ENCODE measurements at regions of chrX and their contacts with region 1.

Region 1: DNA sequence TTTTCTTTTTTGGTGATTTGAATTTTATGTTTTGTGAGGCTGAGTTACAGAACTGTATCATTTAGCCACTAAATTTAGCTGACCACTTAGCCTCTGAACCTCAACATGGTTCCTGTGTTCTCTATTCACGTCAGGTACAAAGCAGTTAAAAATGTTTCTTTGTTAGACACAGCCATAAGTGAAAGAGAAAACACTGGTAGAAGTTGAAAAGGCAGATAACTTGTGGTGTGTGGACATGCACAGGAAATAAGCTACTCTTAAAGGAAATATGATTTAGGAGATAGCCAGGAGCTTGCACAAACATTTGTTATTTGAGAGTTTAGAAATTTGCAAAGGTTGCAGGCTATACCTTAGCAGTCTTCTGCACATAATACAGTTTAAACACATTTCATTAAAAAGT is 171.0 kb upstream of the RPS6KA3 start:
- DNase-seq: no peak
- ATAC-seq: peak; percentile 79
- H3K4me3 Mint-ChIP-seq: peak overlapping the region; percentile 26
- H3K27ac Mint-ChIP-seq: peak overlapping the region; percentile 93
- H3K4me1 Mint-ChIP-seq: peaks cover 50% of the 10 kb centered on the region
- H3K27me3 Mint-ChIP-seq: no peaks in the 10 kb centered on the region

Region 2: GRCh38 chrX:20252381-20253231 is 185.1 kb before region 1 on chrX:
- CTCF ChIA-PET with region 1: interaction called, 10 read pairs
- DNase-seq: peak; percentile 75
- ATAC-seq: peak; percentile 77
- H3K4me3 Mint-ChIP-seq: no peak overlapping the region
- H3K27ac Mint-ChIP-seq: peak overlapping the region; percentile 70
- H3K4me1 Mint-ChIP-seq: peaks cover 40% of the 10 kb centered on the region
- H3K27me3 Mint-ChIP-seq: no peaks in the 10 kb centered on the region

Region 3: DNA sequence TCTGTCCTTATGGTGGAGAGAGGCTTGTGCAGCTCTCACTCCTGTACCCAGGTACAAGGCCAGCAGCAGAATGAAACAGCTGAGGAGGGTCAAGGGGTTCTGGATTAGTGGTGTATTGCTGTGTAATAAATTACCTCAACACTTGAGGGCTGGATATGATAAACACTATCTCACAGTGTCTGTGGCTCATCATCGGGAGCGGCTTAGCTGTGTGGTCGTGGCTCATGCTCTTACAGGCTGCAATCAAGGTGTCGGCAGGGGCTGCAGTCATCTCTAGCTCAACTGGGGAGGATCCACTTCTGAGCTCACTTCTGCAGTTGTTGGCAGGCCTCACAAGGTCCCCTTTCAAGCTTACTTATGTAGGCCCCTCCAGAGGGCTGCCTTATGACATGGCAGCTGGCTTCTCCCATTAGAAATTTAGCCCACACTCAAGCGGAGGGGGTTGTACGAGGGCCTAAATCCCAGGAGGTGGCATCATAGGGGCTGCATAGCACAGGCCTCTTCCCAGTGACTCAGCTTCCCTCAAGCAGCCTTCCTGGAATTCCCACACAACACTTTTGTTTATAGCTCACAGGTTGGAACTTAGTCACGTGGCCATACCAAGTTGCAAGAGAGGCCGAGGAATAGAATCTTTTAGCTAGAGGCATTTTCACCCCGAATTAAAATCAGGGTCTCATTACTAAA is 22.8 kb before region 1 on chrX:
- CTCF ChIA-PET with region 1: interaction called, 11 read pairs
- DNase-seq: peak; percentile 54
- ATAC-seq: peak; percentile 45
- H3K4me3 Mint-ChIP-seq: no peak overlapping the region
- H3K27ac Mint-ChIP-seq: peak overlapping the region; percentile 67
- H3K4me1 Mint-ChIP-seq: peaks cover 41% of the 10 kb centered on the region
- H3K27me3 Mint-ChIP-seq: no peaks in the 10 kb centered on the region